ENCODE measurements at regions of chr6 and their contacts with region 1.

Region 1: DNA sequence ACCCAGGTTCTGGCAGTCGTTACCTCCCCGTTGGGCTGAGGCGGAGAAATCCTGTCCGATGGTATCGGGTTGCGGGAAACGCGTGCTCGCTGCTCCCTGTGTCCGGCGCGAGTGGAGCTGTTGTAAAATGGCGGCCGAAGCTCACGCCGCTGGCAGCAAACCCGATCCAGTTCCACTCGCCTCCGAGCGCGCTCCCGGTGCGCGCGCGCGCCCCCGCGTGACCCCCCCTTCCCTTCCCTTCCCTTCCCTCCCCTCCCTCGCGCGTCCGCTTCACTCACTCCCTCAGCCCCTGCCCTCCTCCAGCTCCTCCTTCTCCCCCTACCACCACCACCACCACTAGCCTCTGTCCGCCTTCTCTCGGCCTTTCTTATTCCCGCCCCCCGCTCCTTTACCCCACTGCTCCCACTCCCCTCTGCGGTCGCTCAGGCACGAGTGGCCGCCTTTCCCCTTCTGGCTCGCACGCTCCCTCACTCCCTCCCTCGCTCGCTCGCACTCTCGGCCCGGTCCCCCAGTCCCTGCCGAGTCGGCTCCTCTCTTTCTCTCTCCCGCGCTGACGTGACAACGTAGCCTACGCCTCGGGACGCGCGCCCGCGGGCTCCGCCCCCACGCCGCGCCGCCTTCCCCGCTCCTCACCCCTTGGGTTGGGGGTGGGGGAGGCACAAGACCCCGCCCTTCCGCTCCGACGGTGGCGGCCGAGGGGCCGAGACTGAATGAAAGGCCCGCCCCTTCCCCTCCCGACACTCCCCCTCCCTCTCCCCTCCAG is at the start of gene SYNCRIP:
- DNase-seq: peak; percentile 95 to 100 (median 99)

Region 2: DNA sequence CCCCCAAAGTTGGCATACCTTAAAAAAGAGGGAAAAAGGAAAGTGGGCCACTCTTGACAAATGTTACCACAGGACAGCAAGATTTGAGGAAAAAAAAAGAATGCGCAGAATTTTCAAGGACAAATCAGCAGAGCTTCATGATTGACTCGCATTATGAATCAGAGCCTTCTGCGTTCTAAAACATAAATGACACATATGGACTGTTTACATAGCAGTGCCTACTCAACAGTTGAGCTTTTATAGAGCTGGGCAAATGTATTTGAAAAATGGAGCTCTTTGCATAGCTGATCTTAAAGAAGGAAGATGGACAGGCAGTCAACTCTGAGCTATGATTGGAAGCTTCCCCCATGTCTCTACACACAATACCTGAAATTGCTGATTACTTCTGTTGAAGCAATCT is 406.3 kb before region 1 on chr6:
- intact Hi-C with region 1: no loop called
- DNase-seq: no peak

Region 3: GRCh38 chr6:85291326-85291725 is 351.6 kb before region 1 on chr6:
- intact Hi-C with region 1: no loop called
- DNase-seq: no peak

Region 4: GRCh38 chr6:85593438-85594196 is 49.3 kb before region 1 on chr6 and contains the start of gene SNX14:
- intact Hi-C with region 1: loop called (anchors 2 kb)
- DNase-seq: peak; percentile 80 to 95 (median 90)

Region 5: GRCh38 chr6:85678602-85679444 is 35.9 kb after region 1 on chr6:
- intact Hi-C with region 1: loop called (anchors 1 kb)
- DNase-seq: peak; percentile 95 to 99 (median 98)

Measured in head of caudate nucleus (tissue), 42 donors.